ENCODE measurements at regions of chr7 and their contacts with region 1.

Region 1: GRCh38 chr7:30974605-30975255 is 11.0 kb downstream of the GHRHR start:
- DNase-seq: peak; percentile 82 to 86 (median 84)
- ATAC-seq: peak; percentile 97
- H3K4me3 ChIP-seq: no peak overlapping the region
- H3K27ac ChIP-seq: no peak overlapping the region
- H3K4me1 ChIP-seq: peaks cover 3 to 19% of the 10 kb centered on the region in 2 experiments; a peak in 4 of 5 replicates
- H3K27me3 ChIP-seq: peaks cover 13 to 28% of the 10 kb centered on the region in 2 experiments; a peak in 4 of 5 replicates
- CTCF ChIP-seq: peak; percentile 90 to 96 (median 95)
- EP300 ChIP-seq: no peak
- POLR2A ChIP-seq: no peak
- RAD21 ChIP-seq: peak; percentile 88 to 96

Region 2: DNA sequence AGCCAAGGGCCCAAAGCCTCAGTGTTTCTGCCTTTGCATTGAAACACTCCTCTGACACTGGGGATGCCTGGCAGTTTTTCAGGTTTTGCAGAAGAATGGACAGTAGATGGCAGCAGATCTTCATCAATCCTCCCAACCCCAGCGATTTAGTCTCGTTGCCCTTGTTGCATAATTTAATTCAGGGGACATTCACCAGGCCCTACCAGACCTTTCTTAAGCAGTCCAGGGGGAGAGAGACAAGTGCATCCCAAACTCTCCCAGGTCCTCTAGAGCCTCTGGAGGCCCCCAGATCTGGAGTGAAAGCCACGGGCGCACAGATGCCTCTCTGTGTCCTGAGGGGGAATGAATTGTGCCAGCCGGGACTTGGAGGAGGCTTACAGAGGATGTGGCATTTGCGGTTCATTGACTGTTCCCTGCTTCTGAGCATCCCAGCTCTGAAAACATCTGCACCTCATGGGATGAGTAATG is 173.9 kb before region 1 on chr7:
- CTCF ChIA-PET with region 1: interaction called, 16 read pairs
- POLR2A ChIA-PET with region 1: interaction called, 3 read pairs
- in situ Hi-C with region 1: loop called (anchors 5 kb)
- intact Hi-C with region 1: loop called (anchors 1 kb)
- DNase-seq: peak; percentile 62 to 72 (median 65)
- ATAC-seq: peak; percentile 89
- H3K4me3 ChIP-seq: no peak overlapping the region
- H3K27ac ChIP-seq: no peak overlapping the region
- H3K4me1 ChIP-seq: no peaks in the 10 kb centered on the region; a peak in 2 of 5 replicates
- H3K27me3 ChIP-seq: no peaks in the 10 kb centered on the region
- CTCF ChIP-seq: peak; percentile 70 to 83 (median 74)
- EP300 ChIP-seq: no peak
- POLR2A ChIP-seq: no peak
- RAD21 ChIP-seq: peak; percentile 74 to 85

Region 3: DNA sequence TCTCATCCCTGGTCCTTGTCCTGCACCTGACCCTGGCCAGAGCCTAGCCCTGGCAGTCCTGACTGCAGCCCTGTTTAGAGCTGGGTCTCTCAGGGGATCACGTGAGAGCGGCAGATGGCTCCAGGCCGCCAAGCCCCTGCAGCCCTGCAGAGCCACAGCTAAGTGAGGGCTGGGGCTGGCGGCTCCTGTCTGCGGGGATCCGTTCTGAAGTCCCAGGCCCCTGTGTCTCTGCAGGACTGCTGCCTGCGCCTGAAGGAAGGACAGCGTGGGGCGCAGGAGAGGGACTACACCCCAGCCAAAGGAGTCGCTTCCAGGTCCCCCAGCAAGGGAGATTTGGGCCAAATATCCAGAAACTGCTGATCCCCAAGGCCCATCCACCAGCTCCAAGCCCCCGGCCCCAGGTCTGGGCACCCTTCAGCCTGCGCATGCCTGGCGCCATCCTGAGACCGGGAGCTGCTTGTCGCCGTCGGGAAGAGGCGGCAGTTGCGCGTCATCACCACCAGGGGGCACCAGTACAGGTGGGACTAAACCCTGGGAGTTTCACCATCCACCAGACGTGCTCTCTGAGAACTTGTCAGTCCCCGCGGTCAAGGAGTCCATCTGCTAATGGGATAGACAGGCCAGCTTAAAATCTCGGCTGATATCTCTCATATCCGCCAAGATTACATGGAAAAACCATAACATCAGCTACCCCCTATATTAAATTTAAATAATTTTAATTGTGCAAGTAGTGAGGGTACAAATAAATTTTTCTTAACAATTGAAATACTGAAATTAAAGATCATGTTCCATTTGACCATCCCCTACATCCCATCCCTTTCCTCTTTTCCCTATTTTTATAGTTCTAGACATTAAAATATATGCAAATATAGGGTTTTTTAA is 36.1 kb before region 1 on chr7:
- CTCF ChIA-PET with region 1: no interaction called
- POLR2A ChIA-PET with region 1: no interaction called
- in situ Hi-C with region 1: no loop called
- intact Hi-C with region 1: loop called (anchors 2 kb)
- DNase-seq: peak; percentile 83 to 90 (median 90)
- ATAC-seq: peak; percentile 94
- H3K4me3 ChIP-seq: no peak overlapping the region
- H3K27ac ChIP-seq: no peak overlapping the region
- H3K4me1 ChIP-seq: peaks cover 0 to 19% of the 10 kb centered on the region in 2 experiments; a peak in 3 of 5 replicates
- H3K27me3 ChIP-seq: no peaks in the 10 kb centered on the region
- CTCF ChIP-seq: peak; percentile 94 to 97 (median 95)
- EP300 ChIP-seq: no peak
- POLR2A ChIP-seq: no peak
- RAD21 ChIP-seq: peak; percentile 34 to 71; a peak in 2 of 4 replicates

Measured in K562 (cell line).